HCT116 (cell line): ENCODE measurements at regions of chr12 and their contacts with region 1.

Region 1: GRCh38 chr12:80763874-80764273 is 47.2 kb downstream of the MYF5 start:
- DNase-seq: peak; percentile 39
- ATAC-seq: no peak
- H3K4me3 ChIP-seq: no peak overlapping the region
- H3K27ac ChIP-seq: no peak overlapping the region
- H3K4me1 ChIP-seq: no peaks in the 10 kb centered on the region
- H3K27me3 ChIP-seq: peaks cover 4% of the 10 kb centered on the region; the same call in 1 of the 2 replicates
- CTCF ChIP-seq: peak; percentile 41 to 62 (median 60); a peak in 5 of 6 replicates
- POLR2A ChIP-seq: no peak
- RAD21 ChIP-seq: peak; percentile 64

Region 2: DNA sequence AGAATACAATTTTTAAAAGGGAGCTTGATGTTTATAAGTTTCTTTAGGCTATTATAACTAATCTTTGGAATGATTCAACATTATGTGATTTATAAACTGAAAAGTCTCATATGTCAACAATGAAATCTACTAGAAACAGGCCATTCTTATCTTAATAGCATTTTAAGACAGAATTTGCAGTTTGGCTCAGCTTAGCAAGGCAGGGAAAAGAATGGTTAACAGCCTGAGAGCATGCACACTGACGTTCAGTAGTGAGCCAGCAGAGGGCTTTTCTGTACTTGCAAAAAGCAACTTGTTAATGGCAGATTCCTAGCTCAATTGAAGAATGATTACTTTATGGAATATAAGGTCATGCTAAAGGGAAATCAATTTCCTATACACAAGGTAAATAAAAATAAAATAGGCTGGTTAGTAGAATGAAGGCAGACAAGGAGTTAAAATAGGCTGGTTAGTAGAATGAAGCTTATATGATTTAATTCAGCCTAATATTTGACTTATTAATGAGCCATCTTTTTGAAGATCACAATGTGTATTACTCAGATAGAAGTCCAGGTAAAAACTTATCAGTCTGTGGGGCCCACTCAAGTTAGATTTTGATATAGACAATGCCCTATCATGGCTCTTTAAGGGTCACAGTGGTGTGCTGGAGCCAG is 568.7 kb before region 1 on chr12:
- CTCF ChIA-PET with region 1: no interaction called
- POLR2A ChIA-PET with region 1: no interaction called
- RAD21 ChIA-PET with region 1: no interaction called
- intact Hi-C with region 1: loop called (anchors 2 kb)
- DNase-seq: peak; percentile 36
- ATAC-seq: peak; percentile 85
- H3K4me3 ChIP-seq: no peak overlapping the region
- H3K27ac ChIP-seq: no peak overlapping the region
- H3K4me1 ChIP-seq: no peaks in the 10 kb centered on the region
- H3K27me3 ChIP-seq: no peaks in the 10 kb centered on the region
- CTCF ChIP-seq: peak; percentile 50 to 74 (median 73); a peak in 5 of 6 replicates
- POLR2A ChIP-seq: no peak
- RAD21 ChIP-seq: peak; percentile 65

Region 3: GRCh38 chr12:80313209-80313608 is 450.7 kb before region 1 on chr12:
- CTCF ChIA-PET with region 1: no interaction called
- POLR2A ChIA-PET with region 1: no interaction called
- RAD21 ChIA-PET with region 1: no interaction called
- intact Hi-C with region 1: loop called (anchors 10 kb)
- DNase-seq: no peak
- ATAC-seq: no peak
- H3K4me3 ChIP-seq: no peak overlapping the region
- H3K27ac ChIP-seq: no peak overlapping the region
- H3K4me1 ChIP-seq: no peaks in the 10 kb centered on the region
- H3K27me3 ChIP-seq: no peaks in the 10 kb centered on the region
- CTCF ChIP-seq: peak in 2 of 3 experiments; percentile 15 to 27; a peak in 1 of 6 replicates
- POLR2A ChIP-seq: no peak
- RAD21 ChIP-seq: peak; percentile 36; the same call in 1 of the 2 replicates

Region 4: GRCh38 chr12:80861623-80862378 is 97.9 kb after region 1 on chr12:
- CTCF ChIA-PET with region 1: no interaction called
- POLR2A ChIA-PET with region 1: no interaction called
- RAD21 ChIA-PET with region 1: no interaction called
- intact Hi-C with region 1: no loop called
- DNase-seq: no peak
- ATAC-seq: no peak
- H3K4me3 ChIP-seq: no peak overlapping the region
- H3K27ac ChIP-seq: no peak overlapping the region
- H3K4me1 ChIP-seq: no peaks in the 10 kb centered on the region
- H3K27me3 ChIP-seq: peaks cover 12% of the 10 kb centered on the region; the same call in 1 of the 2 replicates
- CTCF ChIP-seq: no peak
- POLR2A ChIP-seq: no peak
- RAD21 ChIP-seq: no peak